Right ventricle myocardium superior (tissue), 1 donor: ENCODE measurements at regions of chr19 and their contacts with region 1.

Region 1: GRCh38 chr19:43950834-43951645 is at the start of gene ZNF221:
- DNase-seq: peak; percentile 91
- ATAC-seq: peak; percentile 100
- total RNA-seq, gene ZNF221: 3.6 TPM

Region 2: GRCh38 chr19:43798546-43799409 is 152.3 kb before region 1 on chr19:
- intact Hi-C with region 1: no loop called
- DNase-seq: no peak
- ATAC-seq: peak; percentile 59

Region 3: GRCh38 chr19:43934985-43935708 is 15.9 kb before region 1 on chr19 and contains the start of gene ZNF45:
- intact Hi-C with region 1: loop called (anchors 1 kb)
- DNase-seq: peak; percentile 92
- ATAC-seq: peak; percentile 100
- total RNA-seq, gene ZNF45: 6.1 TPM